ENCODE measurements at regions of chr10 and their contacts with region 1.

Region 1: GRCh38 chr10:91298224-91298871 is 77.9 kb downstream of the PCGF5 start:
- DNase-seq: peak; percentile 69
- H3K4me3 ChIP-seq: peak overlapping the region in 2 of 3 experiments; percentile 18 to 47
- H3K27ac ChIP-seq: no peak overlapping the region
- H3K4me1 ChIP-seq: peaks cover 5% of the 10 kb centered on the region
- H3K27me3 ChIP-seq: no peaks in the 10 kb centered on the region
- CTCF ChIP-seq: peak; percentile 83 to 99

Region 2: GRCh38 chr10:91043173-91043910 is 255.0 kb before region 1 on chr10:
- CTCF ChIA-PET with region 1: no interaction called
- dilution Hi-C with region 1: no loop called
- in situ Hi-C with region 1: no loop called
- intact Hi-C with region 1: loop called (anchors 1 kb)
- DNase-seq: peak; percentile 12
- H3K4me3 ChIP-seq: no peak overlapping the region
- H3K27ac ChIP-seq: no peak overlapping the region
- H3K4me1 ChIP-seq: no peaks in the 10 kb centered on the region
- H3K27me3 ChIP-seq: no peaks in the 10 kb centered on the region
- CTCF ChIP-seq: peak; percentile 39 to 58

Region 3: GRCh38 chr10:91374052-91374451 is 75.7 kb after region 1 on chr10:
- CTCF ChIA-PET with region 1: interaction called, 13 read pairs
- dilution Hi-C with region 1: no loop called
- in situ Hi-C with region 1: loop called (anchors 5 to 10 kb)
- intact Hi-C with region 1: loop called (anchors 1 kb)
- DNase-seq: no peak
- H3K4me3 ChIP-seq: no peak overlapping the region
- H3K27ac ChIP-seq: no peak overlapping the region
- H3K4me1 ChIP-seq: peaks cover 4% of the 10 kb centered on the region
- H3K27me3 ChIP-seq: no peaks in the 10 kb centered on the region
- CTCF ChIP-seq: no peak

Region 4: DNA sequence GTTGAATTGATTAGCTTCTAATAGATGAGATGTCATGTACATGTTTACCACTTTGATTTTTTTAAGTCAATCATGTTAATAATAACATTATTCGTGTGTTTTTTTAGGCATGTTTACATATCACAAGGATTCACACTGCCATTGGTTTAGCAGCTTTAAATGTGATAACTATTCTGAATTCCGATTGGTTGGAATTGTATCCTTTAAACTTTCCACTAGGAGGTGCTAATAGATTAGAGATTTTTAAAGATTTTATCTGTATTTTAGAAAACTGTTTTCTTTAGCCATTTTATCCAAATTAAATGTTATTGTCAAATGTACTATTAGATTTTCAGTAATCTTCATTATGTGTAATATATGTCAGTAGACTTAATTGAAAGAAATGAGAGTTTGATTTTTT is 195.0 kb after region 1 on chr10:
- CTCF ChIA-PET with region 1: no interaction called
- dilution Hi-C with region 1: no loop called
- in situ Hi-C with region 1: loop called in 1 of 2 experiments (anchors 25 kb)
- intact Hi-C with region 1: loop called (anchors 1 kb)
- DNase-seq: peak; percentile 21
- H3K4me3 ChIP-seq: no peak overlapping the region
- H3K27ac ChIP-seq: no peak overlapping the region
- H3K4me1 ChIP-seq: no peaks in the 10 kb centered on the region
- H3K27me3 ChIP-seq: no peaks in the 10 kb centered on the region
- CTCF ChIP-seq: peak; percentile 31 to 45

Region 5: GRCh38 chr10:91694170-91694794 is 395.9 kb after region 1 on chr10:
- CTCF ChIA-PET with region 1: no interaction called
- dilution Hi-C with region 1: no loop called
- in situ Hi-C with region 1: no loop called
- intact Hi-C with region 1: loop called (anchors 1 kb)
- DNase-seq: peak; percentile 48
- H3K4me3 ChIP-seq: no peak overlapping the region
- H3K27ac ChIP-seq: no peak overlapping the region
- H3K4me1 ChIP-seq: peaks cover 23% of the 10 kb centered on the region
- H3K27me3 ChIP-seq: no peaks in the 10 kb centered on the region
- CTCF ChIP-seq: peak; percentile 89 to 95